ENCODE measurements at regions of chr13 and their contacts with region 1.

Region 1: DNA sequence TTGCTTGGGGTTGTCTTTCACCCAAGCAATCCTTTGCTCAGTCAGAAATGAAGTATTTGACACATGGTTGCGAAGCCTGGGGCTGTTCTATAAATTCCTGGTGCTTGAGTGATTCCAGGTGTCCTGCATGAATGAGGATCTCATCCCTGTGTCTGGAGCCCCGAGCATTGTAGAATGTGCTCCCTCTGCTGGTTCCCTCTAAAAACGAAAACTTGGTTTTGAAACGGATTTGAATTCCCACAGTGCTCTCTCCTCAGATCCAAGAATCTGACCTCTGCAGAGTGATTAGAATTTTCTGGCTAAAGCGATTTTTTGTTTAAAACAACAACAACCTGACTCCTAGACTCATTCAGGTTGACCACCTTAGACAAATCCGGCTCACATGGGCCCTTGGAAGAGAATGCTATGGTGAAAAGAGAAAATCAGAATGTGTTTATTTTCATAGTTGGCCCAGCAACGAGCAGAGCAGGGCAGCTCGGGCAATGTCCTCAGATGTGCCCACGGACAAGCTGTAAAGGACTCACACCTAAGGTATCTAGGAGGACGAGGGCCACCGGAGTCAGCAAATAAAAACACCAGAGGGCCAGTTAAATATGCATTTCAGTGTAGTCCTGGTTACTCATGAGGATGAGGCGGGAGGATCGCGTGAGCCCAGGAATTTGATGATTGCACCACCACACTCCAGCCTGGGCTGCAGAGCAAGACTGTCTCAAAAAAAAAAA is 8.7 kb upstream of the ATP12A start:
- DNase-seq: peak in 3 of 9 experiments; percentile 14 to 60 (median 45)
- ATAC-seq: peak; percentile 31
- H3K4me3 ChIP-seq: peak overlapping the region in 1 of 2 experiments; percentile 6
- H3K4me3 Mint-ChIP-seq: no peak overlapping the region
- H3K27ac ChIP-seq: no peak overlapping the region
- H3K27ac Mint-ChIP-seq: no peak overlapping the region
- H3K4me1 ChIP-seq: peaks cover 5% of the 10 kb centered on the region
- H3K4me1 Mint-ChIP-seq: peaks cover 6% of the 10 kb centered on the region
- H3K27me3 ChIP-seq: peaks cover 0 to 3% of the 10 kb centered on the region in 2 experiments
- H3K27me3 Mint-ChIP-seq: peaks cover 7% of the 10 kb centered on the region
- CTCF ChIP-seq: peak; percentile 34

Region 2: DNA sequence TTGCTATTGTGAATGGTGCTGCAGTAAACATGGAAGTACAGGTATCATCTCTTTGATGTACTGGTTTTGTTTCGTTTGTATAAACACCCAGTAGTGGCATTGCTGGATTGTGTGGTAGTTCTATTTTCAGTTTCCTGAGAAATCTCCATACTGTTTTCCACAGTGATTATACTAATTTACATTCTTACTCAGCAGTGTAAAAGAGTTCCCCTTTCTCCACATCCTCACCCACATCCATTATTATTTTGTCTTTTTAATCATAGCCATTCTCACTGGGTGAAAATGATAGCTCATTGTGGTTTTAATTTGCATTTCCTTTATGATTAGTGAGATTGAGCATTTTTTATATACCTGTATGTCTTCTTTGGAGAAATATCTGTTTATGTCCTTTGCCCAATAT is 96.7 kb before region 1 on chr13:
- CTCF ChIA-PET with region 1: interaction called, 19 read pairs
- POLR2A ChIA-PET with region 1: no interaction called
- intact Hi-C with region 1: loop called (anchors 1 to 2 kb)
- DNase-seq: no peak
- ATAC-seq: no peak
- H3K4me3 ChIP-seq: no peak overlapping the region
- H3K4me3 Mint-ChIP-seq: no peak overlapping the region
- H3K27ac ChIP-seq: no peak overlapping the region
- H3K27ac Mint-ChIP-seq: no peak overlapping the region
- H3K4me1 ChIP-seq: no peaks in the 10 kb centered on the region
- H3K4me1 Mint-ChIP-seq: no peaks in the 10 kb centered on the region
- H3K27me3 ChIP-seq: no peaks in the 10 kb centered on the region
- H3K27me3 Mint-ChIP-seq: peaks cover 8% of the 10 kb centered on the region
- CTCF ChIP-seq: no peak

Region 3: DNA sequence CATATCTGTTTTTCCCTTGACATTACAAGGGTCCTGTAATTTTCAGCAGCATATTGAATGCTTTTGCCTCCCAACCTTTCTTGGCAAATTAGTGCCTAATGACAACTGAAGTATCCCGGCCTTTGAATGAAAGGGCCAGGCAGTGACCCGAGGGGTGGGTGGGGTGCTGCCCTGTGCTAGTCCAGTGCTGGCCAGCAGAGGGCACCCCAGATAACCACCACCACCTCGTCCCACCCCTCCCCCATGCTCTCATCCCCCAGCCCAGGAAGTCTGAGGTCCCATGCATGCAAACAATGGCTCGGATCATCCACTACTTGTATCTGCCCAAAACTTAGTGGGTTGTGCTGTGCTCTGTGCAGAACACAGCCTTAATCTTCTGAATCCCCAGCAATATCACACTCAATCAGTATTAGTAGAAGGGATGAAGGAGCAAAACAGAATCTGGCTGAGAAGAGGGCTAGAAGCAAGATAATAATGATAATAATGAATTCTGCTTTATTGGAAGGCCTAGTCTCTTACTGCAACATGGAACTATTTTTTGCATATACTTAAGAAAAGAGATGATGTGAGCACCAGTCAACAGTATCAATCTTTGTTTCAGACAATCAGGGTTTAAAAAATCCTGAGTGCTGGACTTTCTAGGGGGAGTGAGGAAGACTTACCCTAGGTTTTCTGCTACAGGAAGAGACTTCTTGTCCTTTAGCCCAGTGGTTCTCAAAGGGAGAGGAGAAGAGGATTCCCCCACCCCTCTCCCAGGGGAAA is 12.5 kb after region 1 on chr13:
- CTCF ChIA-PET with region 1: interaction called, 19 read pairs
- POLR2A ChIA-PET with region 1: no interaction called
- intact Hi-C with region 1: no loop called
- DNase-seq: peak in 8 of 9 experiments; percentile 52 to 79 (median 60)
- ATAC-seq: peak; percentile 85
- H3K4me3 ChIP-seq: no peak overlapping the region
- H3K4me3 Mint-ChIP-seq: peak overlapping the region; percentile 51
- H3K27ac ChIP-seq: no peak overlapping the region
- H3K27ac Mint-ChIP-seq: peak overlapping the region; percentile 0
- H3K4me1 ChIP-seq: peaks cover 27% of the 10 kb centered on the region
- H3K4me1 Mint-ChIP-seq: peaks cover 31% of the 10 kb centered on the region
- H3K27me3 ChIP-seq: peaks cover 10 to 17% of the 10 kb centered on the region in 2 experiments
- H3K27me3 Mint-ChIP-seq: peaks cover 30% of the 10 kb centered on the region
- CTCF ChIP-seq: peak; percentile 69

Measured in CD8-positive, alpha-beta T cell (primary cell).